PC-9 (cell line): ENCODE measurements at regions of chr10 and their contacts with region 1.

Region 1: GRCh38 chr10:75245491-75246250 is 9.9 kb upstream of the COMTD1 start:
- DNase-seq: peak; percentile 87 to 99
- H3K4me3 ChIP-seq: no peak overlapping the region; the same call in 1 of the 2 replicates
- H3K27ac ChIP-seq: peak overlapping the region; percentile 96
- H3K4me1 ChIP-seq: peaks cover 81% of the 10 kb centered on the region
- H3K27me3 ChIP-seq: no peaks in the 10 kb centered on the region
- CTCF ChIP-seq: no peak

Region 2: GRCh38 chr10:75049316-75050148 is 196.1 kb before region 1 on chr10:
- CTCF ChIA-PET with region 1: no interaction called
- POLR2A ChIA-PET with region 1: no interaction called
- intact Hi-C with region 1: no loop called
- DNase-seq: no peak
- H3K4me3 ChIP-seq: no peak overlapping the region
- H3K27ac ChIP-seq: no peak overlapping the region
- H3K4me1 ChIP-seq: no peaks in the 10 kb centered on the region
- H3K27me3 ChIP-seq: no peaks in the 10 kb centered on the region
- CTCF ChIP-seq: no peak

Region 3: DNA sequence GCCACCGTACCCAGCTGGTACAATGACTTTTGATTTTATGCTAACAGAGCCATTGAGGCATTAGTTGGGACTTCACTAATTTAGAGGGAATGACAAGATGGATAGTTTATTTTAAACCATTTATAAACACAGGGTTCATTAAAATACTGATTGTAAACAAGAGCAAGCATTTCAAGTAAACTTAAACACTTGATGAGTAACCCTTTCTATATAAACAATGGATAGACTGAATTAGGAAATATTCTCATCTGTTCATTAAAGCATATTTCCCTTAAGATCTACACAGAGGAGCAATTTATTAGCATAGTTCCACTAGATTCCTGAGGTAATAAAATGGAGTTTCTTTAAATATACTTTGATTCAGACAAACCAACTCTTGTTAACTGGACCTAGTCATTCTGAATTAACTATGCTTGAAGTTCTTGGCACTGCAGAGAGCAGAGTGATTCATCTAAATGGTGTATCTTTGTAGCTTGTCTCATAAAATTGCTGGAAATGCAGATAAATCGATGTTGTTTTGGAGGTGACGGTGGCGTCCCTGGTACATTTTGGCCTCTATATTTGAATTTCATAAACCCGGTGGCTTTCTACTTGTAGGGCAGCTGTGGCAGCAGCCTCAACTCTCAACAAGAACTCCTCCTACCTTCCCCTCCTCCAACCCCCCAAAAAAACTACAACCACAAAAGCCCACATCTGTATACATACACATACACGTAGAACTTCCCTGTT is 50.5 kb before region 1 on chr10:
- CTCF ChIA-PET with region 1: interaction called, 13 read pairs
- POLR2A ChIA-PET with region 1: no interaction called
- intact Hi-C with region 1: no loop called
- DNase-seq: peak in 1 of 2 experiments; percentile 57
- H3K4me3 ChIP-seq: no peak overlapping the region
- H3K27ac ChIP-seq: no peak overlapping the region
- H3K4me1 ChIP-seq: peaks cover 36% of the 10 kb centered on the region
- H3K27me3 ChIP-seq: no peaks in the 10 kb centered on the region
- CTCF ChIP-seq: no peak

Region 4: GRCh38 chr10:75294866-75295701 is 49.4 kb after region 1 on chr10:
- CTCF ChIA-PET with region 1: interaction called, 4 read pairs
- POLR2A ChIA-PET with region 1: no interaction called
- intact Hi-C with region 1: loop called (anchors 1 kb)
- DNase-seq: peak; percentile 81 to 97
- H3K4me3 ChIP-seq: peak overlapping the region; percentile 61
- H3K27ac ChIP-seq: peak overlapping the region; percentile 98
- H3K4me1 ChIP-seq: peaks cover 50% of the 10 kb centered on the region
- H3K27me3 ChIP-seq: no peaks in the 10 kb centered on the region
- CTCF ChIP-seq: 0 out of 2 replicates have a peak, but pooled peaks have one; percentile 17

Region 5: GRCh38 chr10:75358835-75359431 is 113.3 kb after region 1 on chr10:
- CTCF ChIA-PET with region 1: no interaction called
- POLR2A ChIA-PET with region 1: no interaction called
- intact Hi-C with region 1: loop called (anchors 10 kb)
- DNase-seq: peak; percentile 50 to 99
- H3K4me3 ChIP-seq: peak overlapping the region; percentile 44; the same call in 1 of the 2 replicates
- H3K27ac ChIP-seq: peak overlapping the region; percentile 98
- H3K4me1 ChIP-seq: peaks cover 57% of the 10 kb centered on the region
- H3K27me3 ChIP-seq: no peaks in the 10 kb centered on the region
- CTCF ChIP-seq: no peak

Region 6: DNA sequence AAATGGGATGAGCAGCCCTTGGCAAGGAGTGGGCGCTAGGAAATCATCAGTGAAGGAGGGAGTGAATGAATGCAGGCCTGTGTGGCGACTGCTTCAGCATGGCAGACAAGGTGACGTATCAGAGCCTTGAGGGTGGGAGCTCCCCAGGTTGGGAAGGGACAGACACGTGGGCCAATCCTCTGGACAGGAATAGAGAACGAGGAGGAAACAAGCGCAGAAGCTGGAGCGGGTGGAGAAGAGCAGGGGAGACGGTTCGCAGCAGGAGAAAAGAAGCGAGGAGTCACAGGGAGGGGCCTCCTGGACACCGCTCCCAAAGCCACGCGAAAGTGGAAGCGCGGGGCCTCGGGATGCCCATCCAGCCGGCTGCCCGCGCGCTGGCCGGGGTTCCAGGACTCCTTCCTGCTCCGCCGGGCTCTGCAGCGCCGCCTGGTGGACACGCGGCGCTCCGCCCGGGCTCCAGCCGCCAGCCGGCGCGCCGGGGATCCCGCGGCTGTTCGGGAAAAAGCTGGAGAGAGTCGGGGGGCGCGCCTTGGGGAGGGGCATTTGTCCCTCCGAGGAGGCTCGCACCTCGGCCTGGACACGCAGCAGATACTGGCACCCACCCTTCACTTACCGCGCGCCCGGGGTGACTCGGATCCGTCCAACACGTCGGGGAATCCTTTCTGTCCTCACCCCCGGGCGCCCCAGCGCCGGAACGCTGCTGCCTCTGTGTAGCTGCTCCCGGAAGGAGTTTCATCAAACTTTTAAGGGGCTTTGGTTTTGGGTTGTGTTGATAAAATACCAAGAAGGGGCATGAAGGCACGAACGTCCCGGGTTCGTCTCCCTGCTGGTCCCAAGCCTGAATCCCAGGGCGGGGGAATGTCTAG is 149.6 kb after region 1 on chr10:
- CTCF ChIA-PET with region 1: no interaction called
- POLR2A ChIA-PET with region 1: no interaction called
- intact Hi-C with region 1: loop called (anchors 2 kb)
- DNase-seq: peak; percentile 58 to 60
- H3K4me3 ChIP-seq: peak overlapping the region; percentile 84
- H3K27ac ChIP-seq: peak overlapping the region; percentile 90
- H3K4me1 ChIP-seq: peaks cover 14% of the 10 kb centered on the region
- H3K27me3 ChIP-seq: no peaks in the 10 kb centered on the region
- CTCF ChIP-seq: peak; percentile 90